Common myeloid progenitor, CD34-positive (primary cell): ENCODE measurements at regions of chr9 and their contacts with region 1.

Region 1: GRCh38 chr9:21789541-21790037 is 12.8 kb upstream of the MTAP start:
- DNase-seq: peak; percentile 90 to 92 (median 91)
- H3K4me3 ChIP-seq: peak overlapping the region in 5 of 7 experiments; percentile 32 to 70 (median 51)
- H3K27ac ChIP-seq: no peak overlapping the region
- H3K4me1 ChIP-seq: no peaks in the 10 kb centered on the region
- H3K27me3 ChIP-seq: peaks cover 0 to 11% (median 2%) of the 10 kb centered on the region in 5 experiments

Region 2: DNA sequence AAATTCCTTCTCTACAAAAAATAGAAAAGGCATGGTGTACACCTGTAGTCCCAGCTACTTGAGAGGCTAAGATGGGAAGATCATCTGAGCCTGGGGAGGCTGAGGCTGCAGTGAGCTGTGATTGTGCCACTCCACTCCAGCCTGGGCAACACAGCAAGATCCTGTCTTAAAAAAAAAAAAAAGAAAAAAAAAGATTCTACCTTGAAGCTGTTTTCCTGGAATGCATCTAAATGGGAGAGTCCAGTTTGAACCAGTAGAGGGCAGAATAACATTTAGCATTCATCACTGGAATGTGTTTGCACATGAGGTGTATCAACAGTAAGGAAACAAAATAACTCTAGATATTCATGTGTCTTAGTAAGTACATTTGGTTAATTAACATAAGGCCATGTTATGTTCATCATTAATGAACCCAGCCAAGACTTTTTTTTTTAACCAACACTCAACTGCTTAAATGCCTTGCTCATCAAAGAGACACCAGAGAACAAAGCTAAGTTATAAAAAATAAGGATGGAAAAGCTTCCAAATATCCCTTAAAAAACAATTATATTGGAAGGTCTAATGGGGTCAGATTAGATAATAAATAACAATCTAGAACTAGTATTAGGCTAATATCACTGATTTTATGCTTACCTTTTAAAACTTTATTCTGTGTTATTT is 323.6 kb before region 1 on chr9:
- CTCF ChIA-PET with region 1: interaction called, 22 read pairs
- POLR2A ChIA-PET with region 1: no interaction called
- DNase-seq: peak; percentile 57 to 76 (median 72)
- H3K4me3 ChIP-seq: no peak overlapping the region
- H3K27ac ChIP-seq: no peak overlapping the region
- H3K4me1 ChIP-seq: no peaks in the 10 kb centered on the region
- H3K27me3 ChIP-seq: no peaks in the 10 kb centered on the region

Region 3: GRCh38 chr9:21709464-21710058 is 80.0 kb before region 1 on chr9:
- CTCF ChIA-PET with region 1: interaction called, 18 read pairs
- POLR2A ChIA-PET with region 1: no interaction called
- DNase-seq: peak; percentile 54 to 73 (median 57)
- H3K4me3 ChIP-seq: no peak overlapping the region
- H3K27ac ChIP-seq: no peak overlapping the region
- H3K4me1 ChIP-seq: no peaks in the 10 kb centered on the region
- H3K27me3 ChIP-seq: peaks cover 0 to 6% (median 2%) of the 10 kb centered on the region in 5 experiments